ENCODE measurements at regions of chr2 and their contacts with region 1.

Region 1: DNA sequence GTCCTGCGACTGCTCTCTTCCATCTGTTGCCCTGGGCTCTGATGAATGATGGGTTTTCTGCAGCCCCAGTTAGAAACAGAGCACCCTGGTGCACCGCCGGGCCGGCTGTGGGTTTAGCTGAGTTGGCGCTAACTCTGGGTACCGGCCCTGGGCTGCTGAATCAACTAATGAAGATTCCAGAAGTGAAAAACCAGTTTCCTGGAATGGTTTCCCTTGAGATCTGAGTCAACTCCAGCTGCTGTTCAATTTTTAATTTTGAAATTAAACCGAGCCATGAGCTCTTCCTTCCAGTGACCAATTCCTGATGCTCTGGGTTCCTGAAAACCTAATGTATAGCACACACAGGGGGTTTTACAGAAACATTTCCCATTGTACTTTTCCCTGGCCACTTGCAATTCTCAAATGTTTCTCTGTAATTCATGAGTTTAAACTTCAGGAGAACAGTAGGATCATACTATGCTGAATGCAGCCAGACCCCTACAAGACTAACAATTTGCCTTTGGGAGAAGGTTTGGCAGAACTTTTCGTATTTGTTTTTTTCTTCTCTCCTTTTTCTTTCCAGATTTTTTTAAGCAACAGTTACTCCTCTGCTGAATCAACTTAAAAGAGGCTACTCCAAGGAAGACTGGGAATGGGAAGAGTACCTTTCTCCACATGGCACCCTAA is 5.5 kb downstream of the COL6A3 start:
- DNase-seq: peak in 3 of 5 donors; percentile 57 to 67 (median 61)
- ATAC-seq: peak; percentile 18 to 55 (median 47)
- H3K4me3 ChIP-seq: peak overlapping the region in 9 of 12 donors; percentile 2 to 71 (median 55)
- H3K27ac ChIP-seq: peak overlapping the region; percentile 8 to 89 (median 71)
- H3K4me1 ChIP-seq: peaks cover 0 to 59% (median 16%) of the 10 kb centered on the region in 12 donors
- H3K27me3 ChIP-seq: peaks cover 0 to 7% (median 0%) of the 10 kb centered on the region in 9 donors
- CTCF ChIP-seq: no peak
- POLR2A ChIP-seq: no peak

Region 2: GRCh38 chr2:237154082-237154638 is 254.3 kb before region 1 on chr2:
- intact Hi-C with region 1: loop called in 6 of 10 experiments (anchors 5 to 10 kb)
- DNase-seq: peak in 1 of 5 donors; percentile 45
- ATAC-seq: peak in 1 of 4 donors; percentile 22
- H3K4me3 ChIP-seq: no peak overlapping the region
- H3K27ac ChIP-seq: peak overlapping the region in 3 of 12 donors; percentile 55 to 77 (median 76)
- H3K4me1 ChIP-seq: peaks cover 0 to 33% (median 3%) of the 10 kb centered on the region in 12 donors
- H3K27me3 ChIP-seq: no peaks in the 10 kb centered on the region
- CTCF ChIP-seq: peak; percentile 44 to 68 (median 58)
- POLR2A ChIP-seq: no peak

Region 3: GRCh38 chr2:237165405-237166276 is 242.8 kb before region 1 on chr2:
- intact Hi-C with region 1: loop called in 6 of 10 experiments (anchors 2 to 5 kb)
- DNase-seq: no peak
- ATAC-seq: peak in 1 of 4 donors; percentile 39
- H3K4me3 ChIP-seq: no peak overlapping the region
- H3K27ac ChIP-seq: peak overlapping the region in 7 of 12 donors; percentile 5 to 58 (median 51)
- H3K4me1 ChIP-seq: peaks cover 0 to 8% (median under 1%) of the 10 kb centered on the region in 12 donors
- H3K27me3 ChIP-seq: no peaks in the 10 kb centered on the region
- CTCF ChIP-seq: peak; percentile 25 to 63 (median 47)
- POLR2A ChIP-seq: no peak